Right ventricle myocardium inferior (tissue), 1 donor: ENCODE measurements at regions of chr17 and their contacts with region 1.

Region 1: GRCh38 chr17:50865984-50866774 is at the start of gene TOB1:
- DNase-seq: peak; percentile 99
- ATAC-seq: peak; percentile 94
- total RNA-seq, gene TOB1: 83.3 TPM

Region 2: DNA sequence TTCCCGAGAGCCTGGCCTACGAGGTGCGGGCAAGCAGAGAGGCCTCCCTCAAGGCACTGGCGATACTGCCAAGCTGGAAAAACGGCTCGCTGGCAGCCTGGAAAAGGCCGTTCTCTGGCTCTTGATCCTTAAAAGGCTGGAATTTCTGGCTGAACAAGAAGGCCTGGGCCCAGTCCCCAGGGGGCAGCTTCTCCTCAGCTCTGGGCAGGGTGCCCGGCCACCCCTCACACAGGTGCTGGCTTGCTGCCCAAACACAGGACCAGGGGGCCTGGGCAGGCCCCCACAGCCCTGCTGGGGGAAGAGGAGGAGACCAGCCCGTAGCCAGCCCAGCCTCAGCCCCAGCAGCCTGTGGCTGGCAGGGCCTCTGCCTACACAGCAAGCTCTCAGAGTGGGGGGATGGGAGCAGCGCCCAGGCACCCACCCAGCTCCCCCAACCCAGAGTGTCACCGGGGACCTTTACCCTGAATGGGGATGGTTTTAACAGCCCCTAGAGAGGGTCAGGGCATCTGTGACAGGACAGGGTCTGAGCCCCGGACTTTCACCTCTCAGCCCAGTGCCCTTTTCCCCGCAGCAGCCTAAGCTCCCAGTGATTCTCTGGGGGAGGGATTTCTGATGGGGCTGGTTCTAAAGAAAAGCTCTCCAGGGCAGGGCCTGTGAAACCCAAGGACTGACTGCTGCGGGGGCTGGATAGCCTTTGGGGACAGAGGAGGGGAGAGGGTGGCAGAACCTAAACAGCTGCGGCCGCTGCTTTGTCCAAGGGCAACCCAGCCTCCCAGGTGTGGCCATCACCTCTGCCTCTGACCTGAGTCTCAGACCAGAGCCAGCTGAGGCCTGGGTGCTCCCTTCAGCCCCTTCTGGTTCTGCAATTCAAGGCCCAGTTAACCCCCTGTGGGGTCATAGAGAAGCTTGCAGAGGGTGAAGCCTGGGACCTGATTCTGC is 38.6 kb after region 1 on chr17:
- intact Hi-C with region 1: loop called (anchors 5 kb)
- DNase-seq: peak; percentile 84
- ATAC-seq: peak; percentile 60

Region 3: DNA sequence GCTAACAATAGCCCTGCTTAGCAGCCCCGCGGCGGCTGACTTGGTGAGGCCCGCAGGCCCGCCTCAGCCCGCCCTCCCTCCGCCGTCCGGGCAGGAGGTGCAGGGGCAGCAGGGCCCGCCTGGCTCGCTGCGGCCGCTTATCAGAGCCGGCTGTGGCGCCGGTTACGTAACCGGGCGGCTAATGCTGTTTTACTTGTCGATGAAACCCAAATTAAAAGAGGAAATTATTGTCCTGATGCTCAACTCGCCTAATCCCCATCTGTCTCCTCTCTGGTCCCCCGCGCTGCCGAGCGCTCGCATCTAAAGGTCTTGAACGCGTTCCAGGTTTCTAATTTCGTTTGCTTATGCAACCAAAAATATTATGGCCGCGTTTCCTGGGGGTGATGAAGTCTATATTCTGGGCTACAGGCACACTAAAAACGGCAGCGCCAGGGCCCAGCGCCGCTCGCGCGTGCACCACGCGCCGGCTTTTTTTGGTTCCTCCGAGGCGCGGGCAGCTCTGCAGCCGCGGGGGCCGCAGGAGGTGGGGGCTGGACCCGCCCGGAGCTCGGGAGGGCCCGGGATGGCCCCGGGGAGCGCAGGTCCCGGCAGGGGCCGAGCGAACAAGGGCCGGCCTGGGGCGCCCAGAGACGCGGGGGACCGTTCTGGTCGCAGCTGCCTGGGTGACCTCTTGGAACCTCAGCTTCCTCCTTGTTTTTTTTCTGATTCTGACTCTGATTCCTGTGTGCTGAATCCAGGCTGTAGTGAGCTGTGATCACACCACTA is 65.1 kb after region 1 on chr17:
- intact Hi-C with region 1: loop called (anchors 1 kb)
- DNase-seq: peak; percentile 94
- ATAC-seq: peak; percentile 96

Region 4: GRCh38 chr17:50944054-50944901 is 78.1 kb after region 1 on chr17:
- intact Hi-C with region 1: loop called (anchors 2 kb)
- DNase-seq: peak; percentile 86
- ATAC-seq: peak; percentile 81

Region 5: GRCh38 chr17:50956750-50957523 is 90.8 kb after region 1 on chr17:
- intact Hi-C with region 1: loop called (anchors 2 kb)
- DNase-seq: peak; percentile 76
- ATAC-seq: peak; percentile 64

Region 6: DNA sequence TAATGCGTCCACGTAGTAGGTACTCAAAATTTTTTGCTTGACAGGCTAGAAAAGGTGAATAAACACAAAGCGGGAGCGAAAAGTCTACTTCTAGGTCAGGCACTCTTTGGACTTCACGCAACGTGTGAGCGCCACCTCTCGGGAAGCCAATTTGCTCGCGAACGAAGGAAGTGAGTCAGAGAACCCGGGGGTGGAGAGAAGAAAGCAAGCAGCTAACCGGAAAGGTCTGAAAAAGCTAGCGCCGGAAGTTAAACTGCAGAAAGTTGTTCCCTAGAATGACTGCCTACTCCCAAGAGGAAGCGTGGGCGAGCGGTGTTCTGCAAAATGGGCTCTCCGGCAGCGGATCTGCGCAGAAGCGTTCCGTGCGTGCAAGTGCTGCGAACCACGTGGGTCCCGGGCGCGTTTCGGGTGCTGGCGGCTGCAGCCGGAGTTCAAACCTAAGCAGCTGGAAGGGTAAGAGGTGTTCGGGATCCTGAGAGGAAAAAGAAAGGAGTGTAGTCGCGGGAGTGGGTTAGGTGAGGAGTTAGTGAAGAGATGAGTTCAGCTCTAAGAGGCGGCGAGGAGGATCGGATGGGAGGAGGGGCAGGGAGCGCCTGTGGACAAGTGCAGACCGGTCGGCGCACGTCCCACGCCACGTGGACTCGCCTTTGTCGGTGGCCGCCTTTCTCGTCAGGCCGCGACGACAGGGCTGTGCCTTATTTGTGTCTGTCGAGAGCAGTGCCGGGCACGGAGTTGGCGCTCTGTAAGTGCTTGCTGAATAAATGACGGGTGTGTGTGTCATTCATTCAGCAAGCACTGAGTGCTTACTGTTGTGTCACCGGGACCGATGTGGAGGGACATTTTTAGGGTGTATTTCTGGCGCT is 287.3 kb after region 1 on chr17 and contains the start of gene NME1:
- intact Hi-C with region 1: loop called (anchors 10 kb)
- DNase-seq: peak; percentile 98
- ATAC-seq: peak; percentile 98
- total RNA-seq, gene NME1: 18.8 TPM